Activated T-helper 1 cell treated with anti-CD3 and anti-CD28 coated beads, Interleukin-12 subunit alpha, Interleukin-12 subunit beta, Interleukin-2, Interleukin-4 antibody, amounts not matched to agents 30 ng/mL and 10 ng/mL and 1 ng/mL, durations not matched to agents 14 hours and 24 hours and 36 hours (primary cell): ENCODE measurements at regions of chr1 and their contacts with region 1.

Region 1: DNA sequence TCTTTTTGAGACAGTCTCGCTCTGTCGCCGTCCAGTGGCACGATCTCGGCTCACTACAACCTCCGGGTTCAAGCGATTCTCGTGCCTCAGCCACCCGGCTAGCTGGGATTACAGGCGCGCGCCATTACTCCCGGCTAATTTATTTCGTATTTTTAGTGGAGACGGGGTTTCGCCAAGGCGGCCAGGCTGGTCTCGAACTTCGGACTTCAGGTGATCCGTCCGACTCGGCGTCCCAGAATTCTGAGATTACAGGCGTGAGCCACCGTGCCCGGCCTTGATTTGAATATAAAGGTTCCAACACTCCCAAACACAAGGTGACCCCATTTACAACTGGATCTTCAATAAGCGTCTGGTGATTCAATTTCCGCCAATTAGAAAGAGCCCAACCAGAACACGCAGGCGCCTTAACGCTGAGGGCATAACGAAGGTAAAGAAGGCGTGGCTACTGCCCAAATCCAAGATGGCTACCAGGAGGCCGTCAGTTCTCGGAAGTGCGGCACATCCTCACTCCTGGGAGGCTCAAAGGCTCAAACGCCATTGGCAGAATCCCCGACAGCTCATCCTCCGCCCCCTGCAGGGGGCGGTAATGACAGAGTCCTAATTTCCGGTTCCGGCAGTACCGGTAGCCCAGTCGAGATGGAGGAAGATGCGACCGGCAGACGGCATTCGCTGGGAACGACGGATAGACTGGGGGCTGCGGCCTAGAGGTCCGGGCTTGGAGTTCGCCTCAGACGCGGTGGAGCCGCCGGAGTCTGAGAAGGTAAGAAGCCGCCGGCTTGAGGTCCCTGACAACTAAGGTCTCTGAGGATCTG is at the start of gene SLC25A44:
- DNase-seq: peak; percentile 97
- H3K4me3 Mint-ChIP-seq: peak within 1 kb of the TSS; percentile 94
- H3K27ac Mint-ChIP-seq: peak within 1 kb of the TSS; percentile 87
- H3K4me1 Mint-ChIP-seq: peaks cover 54% of the 10 kb centered on the region
- H3K27me3 Mint-ChIP-seq: no peaks in the 10 kb centered on the region
- total RNA-seq, gene SLC25A44: 67.6 and 79.3 TPM in 2 replicates

Region 2: GRCh38 chr1:156060937-156061636 is 132.6 kb before region 1 on chr1 and contains the start of gene RAB25:
- intact Hi-C with region 1: no loop called
- DNase-seq: no peak
- H3K4me3 Mint-ChIP-seq: no peak within 1 kb of the TSS
- H3K27ac Mint-ChIP-seq: no peak within 1 kb of the TSS
- H3K4me1 Mint-ChIP-seq: peaks cover 17% of the 10 kb centered on the region
- H3K27me3 Mint-ChIP-seq: no peaks in the 10 kb centered on the region
- total RNA-seq, gene RAB25: 0.18 TPM in 1 of 2 replicates, not detected in the other

Region 3: GRCh38 chr1:156146020-156146768 is 47.5 kb before region 1 on chr1:
- intact Hi-C with region 1: loop called (anchors 1 kb)
- DNase-seq: peak; percentile 35
- H3K4me3 Mint-ChIP-seq: peak overlapping the region; percentile 64
- H3K27ac Mint-ChIP-seq: peak overlapping the region; percentile 90
- H3K4me1 Mint-ChIP-seq: peaks cover 43% of the 10 kb centered on the region
- H3K27me3 Mint-ChIP-seq: no peaks in the 10 kb centered on the region

Region 4: GRCh38 chr1:156160743-156161171 is 32.9 kb before region 1 on chr1:
- intact Hi-C with region 1: loop called (anchors 2 kb)
- DNase-seq: peak; percentile 52
- H3K4me3 Mint-ChIP-seq: peak overlapping the region; percentile 66
- H3K27ac Mint-ChIP-seq: peak overlapping the region; percentile 45
- H3K4me1 Mint-ChIP-seq: peaks cover 54% of the 10 kb centered on the region
- H3K27me3 Mint-ChIP-seq: peaks cover 3% of the 10 kb centered on the region

Region 5: DNA sequence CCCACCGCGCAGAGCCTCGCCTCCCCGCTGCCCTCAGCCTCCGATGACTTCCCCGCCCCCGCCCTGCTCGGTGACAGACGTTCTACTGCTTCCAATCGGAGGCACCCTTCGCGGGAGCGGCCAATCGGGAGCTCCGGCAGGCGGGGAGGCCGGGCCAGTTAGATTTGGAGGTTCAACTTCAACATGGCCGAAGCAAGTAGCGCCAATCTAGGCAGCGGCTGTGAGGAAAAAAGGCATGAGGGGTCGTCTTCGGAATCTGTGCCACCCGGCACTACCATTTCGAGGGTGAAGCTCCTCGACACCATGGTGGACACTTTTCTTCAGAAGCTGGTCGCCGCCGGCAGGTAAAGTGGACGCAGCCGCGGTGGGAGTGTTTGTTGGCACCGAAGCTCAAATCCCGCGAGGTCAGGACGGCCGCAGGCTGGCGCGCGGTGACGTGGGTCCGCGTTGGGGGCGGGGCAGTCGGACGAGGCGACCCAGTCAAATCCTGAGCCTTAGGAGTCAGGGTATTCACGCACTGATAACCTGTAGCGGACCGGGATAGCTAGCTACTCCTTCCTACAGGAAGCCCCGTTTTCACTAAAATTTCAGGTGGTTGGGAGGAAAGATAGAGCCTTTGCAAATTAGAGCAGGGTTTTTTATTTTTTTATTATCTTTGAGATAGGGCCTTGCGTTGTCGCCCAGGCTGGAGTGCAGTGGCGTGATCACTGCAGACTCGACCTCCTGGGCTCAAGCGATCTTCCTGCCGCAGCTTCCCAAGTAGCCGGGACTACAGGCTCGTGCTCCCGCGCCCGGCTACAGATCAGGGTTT is 19.3 kb after region 1 on chr1 and contains the start of gene PMF1:
- intact Hi-C with region 1: loop called (anchors 1 kb)
- DNase-seq: peak; percentile 93
- H3K4me3 Mint-ChIP-seq: peak within 1 kb of the TSS; percentile 92
- H3K27ac Mint-ChIP-seq: peak within 1 kb of the TSS; percentile 97
- H3K4me1 Mint-ChIP-seq: peaks cover 53% of the 10 kb centered on the region
- H3K27me3 Mint-ChIP-seq: no peaks in the 10 kb centered on the region
- total RNA-seq, gene PMF1: 105 and 111 TPM in 2 replicates

Region 6: DNA sequence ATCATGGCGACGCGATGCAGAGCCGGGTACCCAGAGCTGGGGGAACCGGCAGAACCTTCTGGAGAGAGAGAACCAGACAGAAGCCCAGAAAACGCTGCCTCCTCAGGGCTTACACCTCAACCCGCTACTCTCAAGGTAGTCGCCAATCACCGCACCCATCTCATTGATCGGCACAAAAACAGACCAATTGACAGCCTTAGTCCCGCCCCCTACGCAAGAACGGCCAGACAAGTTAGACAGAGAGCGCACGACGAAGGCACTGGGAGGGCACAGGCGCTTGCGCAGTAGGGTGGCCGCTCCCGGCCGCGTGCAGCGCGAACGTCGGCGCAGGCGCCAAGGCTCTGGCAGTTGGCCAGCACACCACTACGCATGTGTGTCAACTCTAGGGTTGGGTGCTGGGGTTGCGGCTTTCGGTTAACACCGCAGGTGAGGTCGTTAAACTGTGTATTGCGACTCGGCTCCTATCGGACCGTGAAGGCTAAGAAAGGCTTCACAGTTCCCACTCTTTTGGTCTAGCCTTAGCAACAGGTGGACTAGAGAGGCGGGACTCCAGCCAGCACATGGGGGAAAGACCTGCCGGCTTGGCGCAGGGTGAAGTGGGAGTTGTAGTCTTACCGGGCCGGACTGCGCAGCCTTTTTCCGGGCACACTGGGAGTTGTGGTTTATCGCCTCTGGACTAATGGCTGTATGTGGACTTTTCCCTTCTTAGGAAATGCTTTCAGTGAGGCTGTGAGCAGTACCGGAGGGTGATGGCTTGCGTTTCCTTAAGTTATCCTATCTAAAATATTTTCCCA is 144.7 kb after region 1 on chr1 and contains the starts of genes CCT3 and TSACC:
- intact Hi-C with region 1: loop called (anchors 1 kb)
- DNase-seq: peak; percentile 99
- H3K4me3 Mint-ChIP-seq: peak within 1 kb of the TSS; percentile 98
- H3K27ac Mint-ChIP-seq: peak within 1 kb of the TSS; percentile 95
- H3K4me1 Mint-ChIP-seq: peaks cover 41% of the 10 kb centered on the region
- H3K27me3 Mint-ChIP-seq: peaks cover 5% of the 10 kb centered on the region
- total RNA-seq, gene CCT3: 567 and 570 TPM in 2 replicates
- total RNA-seq, gene TSACC: 0.81 TPM in 1 of 2 replicates, not detected in the other

Region 7: DNA sequence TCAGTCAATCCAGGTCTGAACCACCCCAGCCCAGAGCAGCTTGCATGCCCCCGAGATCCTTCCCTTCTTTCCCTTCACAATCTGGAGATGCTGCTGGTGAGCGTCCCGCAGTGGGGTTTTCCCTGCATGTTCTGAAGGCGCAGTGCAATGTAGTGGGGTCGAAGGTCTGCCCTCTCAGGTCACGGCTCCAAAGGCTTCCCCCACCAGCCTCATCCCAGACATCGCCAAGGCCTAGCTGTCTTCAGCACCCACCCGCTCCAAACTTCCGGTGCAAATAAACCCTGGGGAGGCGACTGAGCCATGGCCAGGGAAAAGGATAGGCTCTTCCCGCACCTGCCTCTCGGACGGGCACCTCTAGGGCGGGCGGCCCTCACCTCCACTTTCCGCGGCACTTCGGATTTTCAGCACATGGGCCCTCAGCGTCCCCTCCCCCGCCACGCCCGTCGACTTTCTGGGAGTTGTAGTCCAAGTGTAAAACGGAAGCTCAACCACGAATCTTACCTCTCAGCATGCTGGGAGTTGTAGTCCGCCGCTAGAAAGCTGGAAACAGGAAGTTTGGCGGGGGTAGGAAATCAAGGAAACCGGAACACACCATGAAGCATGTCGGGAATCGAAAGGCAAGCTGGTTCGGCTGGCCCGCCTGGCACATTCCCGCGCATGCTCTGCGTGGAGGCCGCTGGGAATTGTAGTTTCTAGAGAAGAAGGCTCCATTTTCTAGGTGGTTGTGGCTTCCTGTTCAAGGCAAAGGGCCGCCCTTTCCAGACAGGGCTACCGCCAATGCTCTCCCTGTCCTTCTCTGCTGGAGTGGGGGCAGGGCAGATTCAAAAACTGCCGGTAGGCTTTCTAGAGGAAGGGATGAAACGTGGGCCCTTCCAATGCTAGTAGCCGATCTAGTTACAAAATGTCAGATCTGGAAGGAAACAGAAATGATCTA is 547.3 kb after region 1 on chr1 and contains the start of gene MRPL24:
- intact Hi-C with region 1: loop called (anchors 10 kb)
- DNase-seq: peak; percentile 97
- H3K4me3 Mint-ChIP-seq: peak within 1 kb of the TSS; percentile 93
- H3K27ac Mint-ChIP-seq: peak within 1 kb of the TSS; percentile 94
- H3K4me1 Mint-ChIP-seq: peaks cover 54% of the 10 kb centered on the region
- H3K27me3 Mint-ChIP-seq: no peaks in the 10 kb centered on the region
- total RNA-seq, gene MRPL24: 132 and 135 TPM in 2 replicates